ENCODE measurements at regions of chr14 and their contacts with region 1.

Region 1: GRCh38 chr14:49862089-49862673 is 9.6 kb upstream of the NEMF start:
- DNase-seq: peak; percentile 63
- H3K4me3 ChIP-seq: peak overlapping the region; percentile 62
- H3K27me3 ChIP-seq: no peaks in the 10 kb centered on the region
- CTCF ChIP-seq: peak; percentile 100

Region 2: GRCh38 chr14:49653508-49653907 is 208.7 kb before region 1 on chr14:
- CTCF ChIA-PET with region 1: no interaction called
- POLR2A ChIA-PET with region 1: no interaction called
- DNase-seq: no peak
- H3K4me3 ChIP-seq: no peak overlapping the region
- H3K27me3 ChIP-seq: no peaks in the 10 kb centered on the region
- CTCF ChIP-seq: no peak

Region 3: GRCh38 chr14:49796025-49796424 is 66.2 kb before region 1 on chr14:
- CTCF ChIA-PET with region 1: no interaction called
- POLR2A ChIA-PET with region 1: no interaction called
- DNase-seq: no peak
- H3K4me3 ChIP-seq: no peak overlapping the region
- H3K27me3 ChIP-seq: no peaks in the 10 kb centered on the region
- CTCF ChIP-seq: no peak

Region 4: GRCh38 chr14:49971156-49972130 is 109.3 kb after region 1 on chr14:
- CTCF ChIA-PET with region 1: interaction called, 13 read pairs
- POLR2A ChIA-PET with region 1: interaction called, 8 read pairs
- DNase-seq: no peak
- H3K4me3 ChIP-seq: no peak overlapping the region
- H3K27me3 ChIP-seq: no peaks in the 10 kb centered on the region
- CTCF ChIP-seq: no peak

Region 5: DNA sequence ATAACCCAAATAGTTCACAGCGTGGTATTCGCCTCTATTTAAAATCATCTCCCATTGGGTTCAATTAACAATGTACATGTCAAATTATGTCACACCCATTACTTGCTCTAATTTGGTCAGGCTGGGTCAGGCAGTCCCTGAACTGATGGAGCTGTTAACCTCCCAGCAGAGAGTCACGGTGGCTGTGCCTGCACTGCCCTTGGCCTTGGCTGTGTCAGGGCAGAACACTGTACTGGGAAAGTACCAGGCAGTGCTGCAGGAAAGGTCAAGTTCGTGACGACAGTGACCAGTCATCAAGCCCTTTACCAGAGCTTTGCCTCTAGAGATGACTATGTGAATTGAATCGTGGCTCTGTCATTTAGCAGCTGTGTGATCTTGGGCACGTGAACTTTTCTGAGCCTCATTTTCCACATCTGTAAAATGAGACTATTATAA is 130.7 kb after region 1 on chr14:
- CTCF ChIA-PET with region 1: interaction called, 13 read pairs
- POLR2A ChIA-PET with region 1: no interaction called
- DNase-seq: no peak
- H3K4me3 ChIP-seq: no peak overlapping the region
- H3K27me3 ChIP-seq: no peaks in the 10 kb centered on the region
- CTCF ChIP-seq: no peak

Region 6: DNA sequence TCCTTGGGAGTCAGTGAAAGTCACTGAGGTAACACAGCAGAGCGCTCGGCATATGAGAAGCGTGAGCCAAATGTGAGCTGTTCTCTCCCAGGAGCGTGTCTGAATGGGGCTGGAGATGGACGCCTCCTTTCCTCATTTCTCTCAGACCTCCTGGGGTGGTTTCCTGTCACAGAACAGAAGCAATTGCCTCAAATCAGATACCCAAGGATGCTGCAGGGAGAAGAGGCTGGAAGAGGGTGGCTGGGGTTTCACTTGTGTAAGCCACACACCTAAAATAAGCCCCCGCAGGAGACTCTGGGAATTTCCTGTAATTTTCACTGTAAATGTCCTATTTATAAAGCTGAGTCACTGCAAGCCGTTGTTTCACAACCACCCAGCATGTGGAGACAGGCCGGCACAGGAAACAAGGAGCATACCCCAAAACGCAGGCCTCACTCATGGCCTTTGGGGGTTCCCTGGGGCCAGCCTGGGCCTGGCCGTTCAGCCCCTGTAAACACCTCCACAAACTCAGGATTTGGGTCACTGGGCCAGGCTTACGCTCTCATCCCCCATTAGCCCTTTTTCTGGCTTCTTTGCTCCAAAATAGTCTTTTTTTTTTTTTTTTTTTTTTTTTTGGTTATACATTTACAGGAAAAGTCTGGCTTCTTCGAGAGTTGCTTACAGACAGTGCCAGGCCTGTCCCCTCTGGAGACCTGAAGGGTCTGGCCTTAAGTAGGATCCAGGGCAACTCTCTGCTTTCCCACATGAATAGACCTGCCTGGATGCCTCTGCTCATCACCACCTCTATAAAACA is 198.9 kb after region 1 on chr14:
- CTCF ChIA-PET with region 1: interaction called, 25 read pairs
- POLR2A ChIA-PET with region 1: interaction called, 3 read pairs
- DNase-seq: peak; percentile 76
- H3K4me3 ChIP-seq: no peak overlapping the region
- H3K27me3 ChIP-seq: no peaks in the 10 kb centered on the region
- CTCF ChIP-seq: peak; percentile 26; the same call in 1 of the 2 replicates

Region 7: GRCh38 chr14:50095895-50096294 is 233.7 kb after region 1 on chr14:
- CTCF ChIA-PET with region 1: interaction called, 113 read pairs
- POLR2A ChIA-PET with region 1: no interaction called
- DNase-seq: no peak
- H3K4me3 ChIP-seq: no peak overlapping the region
- H3K27me3 ChIP-seq: no peaks in the 10 kb centered on the region
- CTCF ChIP-seq: no peak

Region 8: GRCh38 chr14:50109342-50109741 is 247.2 kb after region 1 on chr14:
- CTCF ChIA-PET with region 1: interaction called, 113 read pairs
- POLR2A ChIA-PET with region 1: interaction called, 3 read pairs
- DNase-seq: no peak
- H3K4me3 ChIP-seq: no peak overlapping the region
- H3K27me3 ChIP-seq: no peaks in the 10 kb centered on the region
- CTCF ChIP-seq: peak; percentile 37; the same call in 1 of the 2 replicates

Region 9: DNA sequence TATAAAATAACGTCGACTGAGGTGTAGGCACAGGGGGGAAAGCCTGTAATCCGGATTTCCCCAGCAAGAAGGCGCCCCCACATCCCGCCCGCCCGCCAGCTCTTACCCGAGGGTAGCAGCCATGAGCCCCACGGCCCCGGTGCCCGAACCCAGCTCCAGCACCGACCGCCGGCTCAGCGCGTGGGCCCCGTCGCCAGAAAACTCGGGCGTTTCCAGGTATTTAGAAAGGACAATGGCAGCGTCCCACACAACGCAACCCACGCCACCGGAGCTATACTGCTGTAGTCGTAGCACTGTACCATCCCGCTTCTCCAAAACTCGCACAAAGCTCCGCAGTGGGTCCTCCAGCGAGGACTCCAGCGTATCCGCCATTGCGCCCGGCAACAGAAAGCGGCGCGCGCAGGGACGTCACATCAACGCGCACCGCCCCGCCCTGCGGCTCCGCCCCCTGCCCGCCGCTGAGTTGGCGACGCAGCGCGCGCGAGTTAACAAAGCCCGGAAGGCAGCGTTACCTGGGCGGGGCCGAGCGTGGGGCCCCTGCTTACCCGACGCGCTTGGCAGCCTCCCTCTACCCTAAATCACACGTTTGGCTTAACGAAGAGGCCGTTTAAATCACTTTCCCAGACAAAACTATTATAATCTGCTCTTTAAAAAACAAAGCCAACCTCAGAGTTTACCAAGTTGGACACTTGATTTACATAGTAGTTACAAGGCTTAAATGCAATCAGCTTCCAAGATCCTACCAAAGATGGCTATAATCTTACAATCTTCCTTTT is 254.2 kb after region 1 on chr14 and contains the start of gene VCPKMT:
- CTCF ChIA-PET with region 1: interaction called, 16 read pairs
- POLR2A ChIA-PET with region 1: interaction called, 22 read pairs
- DNase-seq: peak; percentile 44
- H3K4me3 ChIP-seq: peak within 1 kb of the TSS; percentile 65
- H3K27me3 ChIP-seq: no peaks in the 10 kb centered on the region
- CTCF ChIP-seq: no peak
- polyA plus RNA-seq, gene VCPKMT: 3.8 and 5.3 TPM in 2 replicates

Measured in BJ (cell line).